ENCODE measurements at regions of chr9 and their contacts with region 1.

Region 1: DNA sequence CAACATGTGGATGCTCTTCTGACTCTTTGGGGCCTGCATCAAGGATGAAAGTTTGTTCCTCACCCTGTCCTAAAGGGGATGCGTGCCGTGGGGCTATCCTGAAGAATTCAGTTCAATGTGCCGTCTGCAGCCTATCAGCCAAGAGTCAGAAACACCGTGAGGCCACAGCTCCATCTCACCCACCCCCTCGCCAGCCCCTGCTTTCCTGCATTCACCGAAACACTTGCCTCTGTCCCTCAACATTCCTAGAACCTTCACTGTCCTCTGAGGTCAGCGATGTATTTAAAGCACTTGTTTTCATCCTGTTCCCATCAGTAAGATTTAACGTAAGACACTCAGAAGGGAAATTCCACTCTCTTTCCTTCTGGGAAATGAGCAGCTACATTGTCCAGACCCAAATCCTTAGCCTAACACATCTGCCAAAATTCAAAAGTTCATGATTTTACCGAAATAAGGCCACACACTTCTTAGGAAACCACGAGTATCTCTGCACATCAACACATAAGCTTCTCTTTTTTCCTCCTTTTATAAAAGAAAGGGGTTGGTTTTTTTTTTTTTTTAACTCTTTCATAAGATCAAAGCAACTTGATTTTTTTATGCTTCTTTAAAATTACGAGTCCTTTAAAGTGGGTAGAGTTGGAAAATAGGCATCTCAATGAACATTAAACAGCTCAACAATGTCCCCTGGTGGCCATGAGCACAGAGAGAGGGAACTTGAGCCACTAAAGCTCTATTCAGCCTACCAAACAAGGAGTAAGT is 100.7 kb downstream of the SUSD1 start:
- DNase-seq: peak; percentile 34 to 82 (median 70)
- ATAC-seq: peak; percentile 91
- H3K4me3 ChIP-seq: no peak overlapping the region
- H3K4me3 Mint-ChIP-seq: peak overlapping the region; percentile 57
- H3K27ac ChIP-seq: no peak overlapping the region
- H3K27ac Mint-ChIP-seq: peak overlapping the region; percentile 60
- H3K4me1 ChIP-seq: peaks cover 12% of the 10 kb centered on the region
- H3K4me1 Mint-ChIP-seq: peaks cover 18% of the 10 kb centered on the region
- H3K27me3 ChIP-seq: no peaks in the 10 kb centered on the region
- H3K27me3 Mint-ChIP-seq: no peaks in the 10 kb centered on the region
- CTCF ChIP-seq: peak; percentile 96

Region 2: GRCh38 chr9:111759762-111760639 is 314.4 kb before region 1 on chr9:
- CTCF ChIA-PET with region 1: interaction called, 146 read pairs
- POLR2A ChIA-PET with region 1: interaction called, 6 read pairs
- intact Hi-C with region 1: loop called (anchors 1 kb)
- DNase-seq: peak in 7 of 9 experiments; percentile 6 to 79 (median 41)
- ATAC-seq: peak; percentile 67
- H3K4me3 ChIP-seq: no peak overlapping the region
- H3K4me3 Mint-ChIP-seq: no peak overlapping the region
- H3K27ac ChIP-seq: no peak overlapping the region
- H3K27ac Mint-ChIP-seq: no peak overlapping the region
- H3K4me1 ChIP-seq: no peaks in the 10 kb centered on the region
- H3K4me1 Mint-ChIP-seq: peaks cover 4% of the 10 kb centered on the region
- H3K27me3 ChIP-seq: no peaks in the 10 kb centered on the region
- H3K27me3 Mint-ChIP-seq: no peaks in the 10 kb centered on the region
- CTCF ChIP-seq: peak; percentile 81

Region 3: GRCh38 chr9:111828193-111828592 is 246.2 kb before region 1 on chr9:
- CTCF ChIA-PET with region 1: interaction called, 12 read pairs
- POLR2A ChIA-PET with region 1: no interaction called
- intact Hi-C with region 1: loop called (anchors 1 to 2 kb)
- DNase-seq: peak in 2 of 9 experiments; percentile 30 to 41
- ATAC-seq: no peak
- H3K4me3 ChIP-seq: no peak overlapping the region
- H3K4me3 Mint-ChIP-seq: no peak overlapping the region
- H3K27ac ChIP-seq: no peak overlapping the region
- H3K27ac Mint-ChIP-seq: no peak overlapping the region
- H3K4me1 ChIP-seq: no peaks in the 10 kb centered on the region
- H3K4me1 Mint-ChIP-seq: no peaks in the 10 kb centered on the region
- H3K27me3 ChIP-seq: peaks cover 0 to 3% of the 10 kb centered on the region in 2 experiments
- H3K27me3 Mint-ChIP-seq: no peaks in the 10 kb centered on the region
- CTCF ChIP-seq: no peak

Region 4: GRCh38 chr9:111926421-111926875 is 148.0 kb before region 1 on chr9:
- CTCF ChIA-PET with region 1: interaction called, 9 read pairs
- POLR2A ChIA-PET with region 1: no interaction called
- intact Hi-C with region 1: loop called in 1 of 2 experiments (anchors 1 kb)
- DNase-seq: peak; percentile 8 to 83 (median 60)
- ATAC-seq: peak; percentile 94
- H3K4me3 ChIP-seq: peak overlapping the region in 1 of 2 experiments; percentile 36
- H3K4me3 Mint-ChIP-seq: peak overlapping the region; percentile 69
- H3K27ac ChIP-seq: peak overlapping the region; percentile 54 to 67
- H3K27ac Mint-ChIP-seq: peak overlapping the region; percentile 90
- H3K4me1 ChIP-seq: peaks cover 34% of the 10 kb centered on the region
- H3K4me1 Mint-ChIP-seq: peaks cover 43% of the 10 kb centered on the region
- H3K27me3 ChIP-seq: no peaks in the 10 kb centered on the region
- H3K27me3 Mint-ChIP-seq: no peaks in the 10 kb centered on the region
- CTCF ChIP-seq: no peak

Region 5: GRCh38 chr9:112086627-112087026 is 12.2 kb after region 1 on chr9:
- CTCF ChIA-PET with region 1: interaction called, 15 read pairs
- POLR2A ChIA-PET with region 1: no interaction called
- intact Hi-C with region 1: no loop called
- DNase-seq: peak in 2 of 9 experiments; percentile 31 to 42
- ATAC-seq: no peak
- H3K4me3 ChIP-seq: no peak overlapping the region
- H3K4me3 Mint-ChIP-seq: no peak overlapping the region
- H3K27ac ChIP-seq: no peak overlapping the region
- H3K27ac Mint-ChIP-seq: no peak overlapping the region
- H3K4me1 ChIP-seq: no peaks in the 10 kb centered on the region
- H3K4me1 Mint-ChIP-seq: no peaks in the 10 kb centered on the region
- H3K27me3 ChIP-seq: no peaks in the 10 kb centered on the region
- H3K27me3 Mint-ChIP-seq: no peaks in the 10 kb centered on the region
- CTCF ChIP-seq: peak; percentile 55

Measured in CD8-positive, alpha-beta T cell (primary cell).